ENCODE measurements at regions of chr20 and their contacts with region 1.

Region 1: DNA sequence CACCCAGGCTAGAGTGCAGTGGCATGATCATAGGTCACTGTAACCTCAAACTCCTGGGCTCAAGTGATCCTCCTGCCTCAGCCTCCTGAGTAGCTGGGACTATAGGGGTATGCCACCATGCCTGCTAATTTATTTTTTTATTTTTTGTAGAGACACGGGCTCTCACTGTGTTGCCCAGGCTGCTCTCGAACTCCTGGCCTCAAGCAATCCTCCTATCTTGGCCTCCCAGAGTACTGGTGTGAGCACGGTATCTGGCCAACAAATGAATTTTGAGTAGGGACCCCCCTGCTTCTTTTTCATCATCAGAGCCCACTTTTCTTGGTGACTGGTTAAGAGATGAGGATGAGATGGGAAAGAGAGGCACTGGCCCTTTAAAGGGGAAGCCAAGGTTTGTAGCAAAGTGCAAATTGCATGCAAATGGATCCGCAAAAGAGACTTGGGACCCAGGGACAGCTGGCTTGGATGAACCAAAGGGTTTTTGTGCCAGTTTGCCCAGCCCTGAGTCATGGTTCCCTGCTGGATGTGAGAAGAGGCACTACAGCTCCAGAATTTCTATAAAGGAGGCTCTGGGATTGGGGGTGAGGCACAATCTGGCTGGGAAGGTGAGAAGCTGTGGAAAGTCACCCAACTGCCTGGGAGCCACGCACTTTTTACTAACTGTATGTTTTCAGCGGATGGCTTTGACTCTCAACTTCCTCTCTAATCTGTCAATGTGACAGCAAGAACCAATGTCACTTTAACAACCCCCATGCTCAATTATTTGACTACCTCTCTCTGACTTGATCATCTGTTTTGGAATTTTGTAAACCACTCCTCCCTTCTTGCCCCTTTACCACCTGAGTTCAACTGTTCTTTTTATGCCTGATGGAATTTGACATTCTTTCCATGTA is 58.7 kb upstream of the RNF24 start:
- DNase-seq: peak in 1 of 2 experiments; percentile 38
- H3K4me3 ChIP-seq: no peak overlapping the region
- H3K27ac ChIP-seq: no peak overlapping the region
- H3K4me1 ChIP-seq: peaks cover 0 to 3% (median 0%) of the 10 kb centered on the region in 4 experiments; a peak in 1 of 7 replicates
- H3K27me3 ChIP-seq: no peaks in the 10 kb centered on the region
- CTCF ChIP-seq: no peak
- EP300 ChIP-seq: no peak
- POLR2A ChIP-seq: no peak
- RAD21 ChIP-seq: no peak

Region 2: DNA sequence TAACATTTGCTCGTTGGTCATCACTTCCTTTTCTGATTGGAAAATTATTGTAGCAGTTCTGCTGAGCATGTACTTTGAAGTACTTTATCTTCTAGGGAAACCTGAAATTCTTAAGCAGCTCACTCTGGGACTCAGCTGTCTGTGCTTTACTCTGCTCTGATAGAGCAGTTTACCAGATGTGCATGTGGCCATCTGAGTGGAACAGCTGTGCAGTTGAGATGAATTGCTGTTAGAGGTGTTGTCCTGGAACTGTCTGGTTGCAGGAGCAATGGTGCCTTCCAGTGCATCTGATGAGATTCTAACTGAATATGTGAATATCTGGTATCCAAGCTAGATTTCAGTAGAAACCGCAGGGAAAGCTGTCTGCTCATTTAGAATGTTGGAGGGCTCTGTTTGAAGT is 157.7 kb before region 1 on chr20:
- CTCF ChIA-PET with region 1: interaction called, 16 read pairs
- POLR2A ChIA-PET with region 1: no interaction called
- DNase-seq: no peak
- H3K4me3 ChIP-seq: no peak overlapping the region
- H3K27ac ChIP-seq: no peak overlapping the region
- H3K4me1 ChIP-seq: no peaks in the 10 kb centered on the region
- H3K27me3 ChIP-seq: no peaks in the 10 kb centered on the region
- CTCF ChIP-seq: no peak
- EP300 ChIP-seq: no peak
- POLR2A ChIP-seq: no peak
- RAD21 ChIP-seq: no peak

Region 3: DNA sequence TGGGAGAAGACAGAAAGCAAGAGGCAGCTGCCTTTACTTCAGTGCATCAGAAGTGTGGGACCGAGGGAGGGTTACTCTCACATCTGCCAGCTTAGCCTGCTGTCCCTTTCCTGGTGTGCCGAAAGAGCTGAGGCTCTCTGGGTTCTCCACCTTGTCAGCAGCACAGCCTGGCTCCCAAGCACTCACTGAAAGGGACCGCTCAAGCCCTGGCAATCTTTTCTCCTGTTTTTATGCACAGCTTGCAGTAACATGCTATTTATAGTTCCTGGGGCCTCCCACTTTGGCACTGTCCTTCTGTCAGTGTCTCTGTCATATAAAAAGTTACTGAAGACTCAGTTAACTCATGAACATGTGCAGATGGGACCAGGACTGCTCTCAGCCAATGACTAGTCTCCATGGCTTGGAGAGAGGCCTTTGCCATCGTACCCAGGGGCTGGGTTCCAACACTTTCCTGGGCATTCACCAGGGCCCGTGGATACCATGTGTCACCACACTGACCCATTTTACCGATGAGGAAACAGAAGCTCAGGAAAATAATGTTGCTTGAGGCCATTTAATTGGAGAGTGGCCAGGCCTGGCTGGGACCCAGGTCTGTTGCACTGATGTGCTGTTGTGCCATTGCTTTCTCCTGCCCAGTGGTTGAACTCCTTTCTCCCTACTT is 138.7 kb before region 1 on chr20:
- CTCF ChIA-PET with region 1: interaction called, 42 read pairs
- POLR2A ChIA-PET with region 1: interaction called, 57 read pairs
- DNase-seq: no peak
- H3K4me3 ChIP-seq: no peak overlapping the region
- H3K27ac ChIP-seq: no peak overlapping the region
- H3K4me1 ChIP-seq: no peaks in the 10 kb centered on the region
- H3K27me3 ChIP-seq: no peaks in the 10 kb centered on the region; a peak in 1 of 7 replicates
- CTCF ChIP-seq: no peak
- EP300 ChIP-seq: no peak
- POLR2A ChIP-seq: no peak
- RAD21 ChIP-seq: no peak

Region 4: DNA sequence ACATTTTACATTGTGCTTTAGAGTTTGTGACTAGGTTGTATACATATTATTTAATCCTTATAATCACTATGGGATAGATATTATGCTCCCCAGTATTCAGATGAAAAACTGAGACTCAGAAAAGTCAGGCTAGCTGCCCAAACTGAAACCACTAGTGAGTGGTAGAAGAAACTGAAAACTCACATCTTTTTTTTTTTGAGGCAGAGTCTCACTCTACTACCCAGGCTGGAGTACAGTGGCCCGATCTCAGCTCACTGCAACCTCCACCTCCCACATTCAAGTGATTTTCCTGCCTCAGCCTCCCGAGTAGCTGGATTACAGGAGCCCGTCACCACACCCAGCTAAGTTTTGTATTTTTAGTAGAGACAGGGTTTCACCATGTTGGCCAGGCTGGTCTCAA is 81.0 kb before region 1 on chr20:
- CTCF ChIA-PET with region 1: interaction called, 22 read pairs
- POLR2A ChIA-PET with region 1: no interaction called
- DNase-seq: no peak
- H3K4me3 ChIP-seq: no peak overlapping the region
- H3K27ac ChIP-seq: no peak overlapping the region
- H3K4me1 ChIP-seq: no peaks in the 10 kb centered on the region
- H3K27me3 ChIP-seq: no peaks in the 10 kb centered on the region
- CTCF ChIP-seq: no peak
- EP300 ChIP-seq: no peak
- POLR2A ChIP-seq: no peak
- RAD21 ChIP-seq: no peak

Region 5: GRCh38 chr20:4045741-4046140 is 28.4 kb before region 1 on chr20:
- CTCF ChIA-PET with region 1: interaction called, 34 read pairs
- POLR2A ChIA-PET with region 1: interaction called, 4 read pairs
- DNase-seq: no peak
- H3K4me3 ChIP-seq: no peak overlapping the region
- H3K27ac ChIP-seq: no peak overlapping the region
- H3K4me1 ChIP-seq: peaks cover 0 to 4% (median under 1%) of the 10 kb centered on the region in 4 experiments; a peak in 4 of 7 replicates
- H3K27me3 ChIP-seq: 0 out of 7 replicates have a peak, but pooled peaks cover 0 to 2% (median 0%) of the 10 kb centered on the region in 4 experiments
- CTCF ChIP-seq: no peak
- EP300 ChIP-seq: no peak
- POLR2A ChIP-seq: no peak
- RAD21 ChIP-seq: no peak

Region 6: GRCh38 chr20:4060064-4060795 is 13.9 kb before region 1 on chr20:
- CTCF ChIA-PET with region 1: interaction called, 10 read pairs
- POLR2A ChIA-PET with region 1: no interaction called
- DNase-seq: no peak
- H3K4me3 ChIP-seq: no peak overlapping the region
- H3K27ac ChIP-seq: no peak overlapping the region
- H3K4me1 ChIP-seq: peaks cover 2 to 16% (median 8%) of the 10 kb centered on the region in 4 experiments
- H3K27me3 ChIP-seq: no peaks in the 10 kb centered on the region
- CTCF ChIP-seq: no peak
- EP300 ChIP-seq: no peak
- POLR2A ChIP-seq: no peak
- RAD21 ChIP-seq: no peak

Region 7: DNA sequence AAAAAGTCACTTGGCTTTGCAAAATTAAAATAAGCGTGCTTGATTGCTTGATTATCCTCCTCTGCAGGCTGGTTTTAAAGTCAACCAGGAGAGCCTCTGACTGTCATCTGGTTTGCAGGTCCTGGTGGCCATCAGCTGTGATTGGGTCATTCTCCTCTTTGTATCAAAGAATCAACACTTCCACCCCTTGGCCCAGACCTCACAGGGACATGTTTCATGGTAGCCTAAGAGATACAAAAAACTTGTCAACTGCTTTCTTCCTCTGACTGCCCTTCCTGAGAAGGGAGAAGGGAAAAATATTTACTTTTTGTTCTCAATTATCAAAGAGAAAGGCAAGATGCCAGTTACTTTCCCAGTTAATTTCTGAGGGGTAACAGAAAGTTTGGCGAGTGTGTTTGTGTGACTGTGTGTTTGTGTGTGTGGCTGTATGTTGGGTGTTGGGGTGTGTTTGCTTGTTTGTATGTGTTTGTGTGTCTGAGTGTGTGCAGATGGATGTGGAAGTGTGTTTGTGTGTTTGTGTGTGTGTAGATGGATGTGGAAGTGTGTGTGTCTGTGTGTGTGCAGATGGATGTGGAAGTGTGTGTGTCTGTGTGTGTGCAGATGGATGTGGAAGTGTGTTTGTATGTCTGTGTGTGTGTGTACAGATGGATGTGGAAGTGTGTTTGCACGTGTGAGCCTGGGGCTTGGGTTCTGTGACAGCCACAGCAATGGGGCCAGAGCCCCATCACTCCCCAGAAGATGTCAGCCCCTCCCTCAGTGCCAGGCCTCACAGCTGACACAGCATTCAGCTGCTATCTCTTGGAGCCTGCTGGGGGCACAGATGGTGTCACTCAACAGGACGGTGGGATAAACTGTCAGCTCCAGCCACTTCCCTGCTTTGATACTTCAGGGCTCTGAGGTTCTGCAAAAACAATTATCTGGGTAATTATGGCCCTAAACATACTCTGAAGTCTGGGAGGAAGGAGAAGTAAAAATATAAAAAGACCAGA is 39.8 kb after region 1 on chr20:
- CTCF ChIA-PET with region 1: no interaction called
- POLR2A ChIA-PET with region 1: no interaction called
- DNase-seq: peak in 1 of 2 experiments; percentile 37
- H3K4me3 ChIP-seq: no peak overlapping the region
- H3K27ac ChIP-seq: no peak overlapping the region
- H3K4me1 ChIP-seq: peaks cover 0 to 5% (median 2%) of the 10 kb centered on the region in 4 experiments; a peak in 3 of 7 replicates
- H3K27me3 ChIP-seq: no peaks in the 10 kb centered on the region; a peak in 1 of 7 replicates
- CTCF ChIP-seq: no peak
- EP300 ChIP-seq: no peak
- POLR2A ChIP-seq: no peak
- RAD21 ChIP-seq: no peak

Measured in H1 (cell line).